Activated CD8-positive, alpha-beta T cell treated with anti-CD3 and anti-CD28 coated beads, Interleukin-2, amount 10 ng/mL, durations not matched to agents 7 days and 5 days (primary cell): ENCODE measurements at regions of chr1 and their contacts with region 1.

Region 1: DNA sequence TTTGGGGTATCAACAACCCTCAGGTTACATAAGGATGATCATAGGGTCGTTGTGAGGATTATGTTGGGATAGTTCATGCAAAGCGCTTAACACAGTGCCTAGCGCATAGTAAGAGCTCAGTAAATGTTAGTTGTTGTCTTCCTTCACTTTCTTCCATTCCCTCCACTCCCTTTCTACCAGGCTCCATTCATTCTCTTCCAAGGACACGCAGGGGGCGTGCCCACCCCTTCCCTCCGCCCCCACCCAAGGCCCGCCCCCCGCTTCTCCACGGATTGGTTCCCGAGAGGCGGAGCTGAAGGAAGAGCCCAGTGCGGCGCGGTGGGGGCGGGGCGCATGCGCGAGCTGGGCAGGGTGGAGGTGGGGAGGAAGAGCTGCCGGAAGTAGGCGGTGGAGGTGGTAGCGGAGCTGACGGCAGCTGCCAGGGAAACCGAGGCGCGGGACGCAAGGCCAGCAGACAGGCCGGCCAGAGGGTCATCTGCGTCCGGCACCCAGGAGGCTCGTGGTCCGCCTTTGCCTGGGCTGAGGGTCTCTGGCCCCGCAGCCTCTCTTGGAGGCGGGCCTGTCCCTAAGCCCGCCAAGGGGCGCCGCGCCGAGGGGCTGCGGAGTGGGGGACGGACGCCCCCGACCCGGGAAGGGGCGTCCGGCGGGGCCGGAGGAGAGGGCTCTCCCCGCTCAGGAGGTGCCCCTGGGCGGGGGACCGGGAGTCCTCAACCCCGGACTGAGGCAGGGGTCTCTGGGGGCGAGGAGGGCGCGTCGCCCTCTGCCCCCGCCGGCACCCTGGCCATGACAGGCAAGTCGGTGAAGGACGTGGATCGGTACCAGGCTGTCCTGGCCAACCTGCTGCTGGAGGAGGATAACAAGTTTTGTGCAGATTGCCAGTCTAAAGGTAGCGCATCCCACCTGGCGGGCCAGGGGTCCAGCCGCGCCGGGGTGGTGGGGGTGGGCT is at the start of gene SMAP2:
- DNase-seq: peak; percentile 97
- ATAC-seq: peak; percentile 87
- H3K4me3 Mint-ChIP-seq: peak within 1 kb of the TSS; percentile 94
- H3K27ac Mint-ChIP-seq: peak within 1 kb of the TSS; percentile 97
- H3K4me1 Mint-ChIP-seq: peaks cover 42% of the 10 kb centered on the region
- H3K27me3 Mint-ChIP-seq: no peaks in the 10 kb centered on the region
- total RNA-seq, gene SMAP2: 106 to 107 TPM

Region 2: DNA sequence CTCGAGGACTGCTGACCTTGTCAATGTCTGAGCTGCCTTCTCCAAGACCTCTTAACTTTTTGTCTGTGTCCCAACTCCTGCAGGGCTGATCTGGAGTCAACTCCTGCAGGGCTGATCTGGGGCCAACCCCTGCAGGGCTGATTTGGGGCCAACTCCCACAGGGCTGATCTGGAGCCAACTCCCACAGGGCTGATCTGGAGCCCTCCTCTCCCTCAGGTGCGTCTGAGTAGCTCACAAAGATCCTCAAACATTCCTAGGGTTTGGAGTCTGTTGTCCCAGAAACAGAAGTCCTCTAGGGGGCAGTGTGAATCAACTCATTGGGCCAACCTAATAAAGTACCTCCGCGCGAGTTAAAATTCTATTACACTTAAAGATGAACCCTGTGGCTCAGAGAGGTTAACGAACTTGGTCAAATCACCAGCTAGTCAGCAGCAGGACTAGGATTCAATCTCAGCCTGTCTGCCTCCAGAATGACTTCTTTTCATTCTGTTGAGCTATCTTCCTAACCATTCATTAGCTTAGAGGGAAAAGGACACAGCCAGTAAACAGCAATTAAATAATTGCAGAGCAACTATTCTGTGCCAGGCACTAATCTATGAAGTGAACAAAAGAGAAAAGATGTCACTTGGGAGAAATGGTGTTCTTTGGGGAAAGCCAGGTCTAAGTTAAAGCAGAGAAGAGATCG is 229.6 kb before region 1 on chr1:
- CTCF ChIA-PET with region 1: interaction called, 10 read pairs
- POLR2A ChIA-PET with region 1: interaction called, 3 read pairs
- DNase-seq: peak; percentile 67
- ATAC-seq: peak; percentile 73
- H3K4me3 Mint-ChIP-seq: no peak overlapping the region
- H3K27ac Mint-ChIP-seq: no peak overlapping the region
- H3K4me1 Mint-ChIP-seq: peaks cover 3% of the 10 kb centered on the region
- H3K27me3 Mint-ChIP-seq: peaks cover 45% of the 10 kb centered on the region

Region 3: GRCh38 chr1:40344597-40344996 is 29.0 kb before region 1 on chr1:
- CTCF ChIA-PET with region 1: interaction called, 21 read pairs
- POLR2A ChIA-PET with region 1: interaction called, 18 read pairs
- DNase-seq: no peak
- ATAC-seq: peak; percentile 55
- H3K4me3 Mint-ChIP-seq: peak overlapping the region; percentile 30
- H3K27ac Mint-ChIP-seq: no peak overlapping the region
- H3K4me1 Mint-ChIP-seq: peaks cover 47% of the 10 kb centered on the region
- H3K27me3 Mint-ChIP-seq: no peaks in the 10 kb centered on the region

Region 4: GRCh38 chr1:40385437-40386358 is 12.1 kb after region 1 on chr1:
- CTCF ChIA-PET with region 1: interaction called, 113 read pairs
- POLR2A ChIA-PET with region 1: interaction called, 381 read pairs
- DNase-seq: peak; percentile 84
- ATAC-seq: peak; percentile 68
- H3K4me3 Mint-ChIP-seq: peak overlapping the region; percentile 79
- H3K27ac Mint-ChIP-seq: peak overlapping the region; percentile 99
- H3K4me1 Mint-ChIP-seq: peaks cover 94% of the 10 kb centered on the region
- H3K27me3 Mint-ChIP-seq: no peaks in the 10 kb centered on the region